Activated CD8-positive, alpha-beta memory T cell treated with anti-CD3 and anti-CD28 coated beads, Interleukin-2, amount 10 ng/mL, durations not matched to agents 7 days and 5 days (primary cell): ENCODE measurements at regions of chr5 and their contacts with region 1.

Region 1: DNA sequence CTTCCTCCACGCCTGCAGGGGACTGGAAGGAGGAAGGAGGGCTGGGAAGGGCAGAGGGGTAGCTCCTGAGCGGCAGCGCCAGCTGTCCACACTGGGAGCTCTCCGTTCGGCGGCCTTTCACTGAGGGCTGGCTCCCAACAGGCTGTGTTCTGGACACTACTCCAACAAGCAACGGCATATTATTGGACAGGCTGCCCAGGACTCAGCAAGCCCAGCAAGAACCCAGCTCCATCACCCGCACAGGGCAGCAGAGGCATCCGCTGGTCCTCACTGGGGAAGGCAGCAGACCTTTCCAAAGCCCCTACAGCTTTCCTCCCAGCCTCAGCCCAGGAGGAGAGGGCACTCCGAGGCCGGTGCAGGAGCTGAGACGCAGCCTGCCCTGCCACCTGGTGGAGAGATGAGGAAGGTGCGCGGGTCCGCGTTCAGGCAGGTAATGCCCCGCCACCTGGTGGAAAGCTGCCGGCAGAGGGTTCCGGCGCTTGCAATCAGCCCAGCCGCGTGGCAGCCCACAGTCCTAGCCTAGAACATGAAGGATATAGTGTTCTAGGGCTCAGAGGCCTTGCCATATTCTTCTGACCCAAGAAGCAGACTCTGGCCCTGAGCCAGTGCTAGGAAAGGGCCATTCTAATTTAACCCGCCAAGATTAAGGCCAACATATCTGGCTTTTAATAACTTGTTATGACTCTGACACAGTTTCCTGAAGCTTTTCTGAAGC is 74.4 kb downstream of the NRG2 start:
- DNase-seq: peak; percentile 92
- ATAC-seq: peak; percentile 100
- H3K4me3 Mint-ChIP-seq: no peak overlapping the region
- H3K27ac Mint-ChIP-seq: no peak overlapping the region
- H3K4me1 Mint-ChIP-seq: no peaks in the 10 kb centered on the region
- H3K27me3 Mint-ChIP-seq: peaks cover 26% of the 10 kb centered on the region

Region 2: GRCh38 chr5:139670369-139671095 is 298.2 kb before region 1 on chr5:
- CTCF ChIA-PET with region 1: no interaction called
- DNase-seq: peak; percentile 66
- ATAC-seq: peak; percentile 35
- H3K4me3 Mint-ChIP-seq: peak overlapping the region; percentile 81
- H3K27ac Mint-ChIP-seq: peak overlapping the region; percentile 80
- H3K4me1 Mint-ChIP-seq: peaks cover 45% of the 10 kb centered on the region
- H3K27me3 Mint-ChIP-seq: no peaks in the 10 kb centered on the region

Region 3: DNA sequence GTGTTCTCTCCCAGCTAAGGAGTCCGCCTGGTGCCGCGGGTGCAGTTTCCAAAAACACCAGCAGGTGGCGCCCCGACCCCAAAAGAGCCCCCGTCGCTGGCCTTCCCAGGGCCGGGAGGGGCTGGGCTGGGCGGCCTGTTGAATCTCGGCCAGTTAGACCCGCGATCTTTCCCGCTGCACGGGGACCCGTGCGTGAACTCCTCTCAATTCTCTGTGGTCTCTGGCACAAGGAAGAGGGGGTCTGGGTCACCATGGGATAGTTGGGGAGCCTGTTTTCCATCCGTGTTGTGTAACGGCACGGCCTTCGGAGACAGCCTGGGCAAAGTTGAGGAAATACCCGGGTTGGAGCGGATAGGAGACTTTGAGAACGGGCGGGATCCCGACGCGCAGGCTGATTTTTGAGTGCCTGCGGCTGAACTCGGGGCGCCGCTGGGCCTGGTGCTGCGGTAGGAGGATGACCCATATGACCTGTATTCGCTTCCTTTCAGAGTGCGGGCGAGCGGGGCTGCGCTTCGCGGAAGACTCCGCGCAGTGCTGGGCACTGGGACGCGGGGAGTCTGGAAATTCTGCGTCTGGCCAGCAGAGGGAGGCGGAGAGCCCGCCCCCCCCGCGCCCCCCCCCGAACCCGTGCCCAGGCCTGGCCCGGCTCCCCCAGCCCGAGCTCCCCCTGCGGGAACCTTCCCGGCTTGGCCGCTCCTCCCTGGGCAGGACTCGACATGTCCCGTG is 181.0 kb before region 1 on chr5:
- CTCF ChIA-PET with region 1: interaction called, 195 read pairs
- DNase-seq: peak; percentile 86
- ATAC-seq: peak; percentile 89
- H3K4me3 Mint-ChIP-seq: peak overlapping the region; percentile 71
- H3K27ac Mint-ChIP-seq: no peak overlapping the region
- H3K4me1 Mint-ChIP-seq: peaks cover 4% of the 10 kb centered on the region
- H3K27me3 Mint-ChIP-seq: peaks cover 29% of the 10 kb centered on the region

Region 4: GRCh38 chr5:139863855-139864558 is 104.7 kb before region 1 on chr5:
- CTCF ChIA-PET with region 1: interaction called, 22 read pairs
- DNase-seq: peak; percentile 71
- ATAC-seq: peak; percentile 67
- H3K4me3 Mint-ChIP-seq: no peak overlapping the region
- H3K27ac Mint-ChIP-seq: no peak overlapping the region
- H3K4me1 Mint-ChIP-seq: no peaks in the 10 kb centered on the region
- H3K27me3 Mint-ChIP-seq: peaks cover 15% of the 10 kb centered on the region

Region 5: GRCh38 chr5:139955053-139955605 is 13.6 kb before region 1 on chr5:
- CTCF ChIA-PET with region 1: interaction called, 42 read pairs
- DNase-seq: no peak
- ATAC-seq: peak; percentile 16
- H3K4me3 Mint-ChIP-seq: no peak overlapping the region
- H3K27ac Mint-ChIP-seq: no peak overlapping the region
- H3K4me1 Mint-ChIP-seq: no peaks in the 10 kb centered on the region
- H3K27me3 Mint-ChIP-seq: peaks cover 17% of the 10 kb centered on the region

Region 6: GRCh38 chr5:140157032-140157803 is 188.5 kb after region 1 on chr5:
- CTCF ChIA-PET with region 1: interaction called, 13 read pairs
- DNase-seq: peak; percentile 91
- ATAC-seq: peak; percentile 99
- H3K4me3 Mint-ChIP-seq: peak overlapping the region; percentile 57
- H3K27ac Mint-ChIP-seq: peak overlapping the region; percentile 46
- H3K4me1 Mint-ChIP-seq: peaks cover 6% of the 10 kb centered on the region
- H3K27me3 Mint-ChIP-seq: no peaks in the 10 kb centered on the region

Region 7: DNA sequence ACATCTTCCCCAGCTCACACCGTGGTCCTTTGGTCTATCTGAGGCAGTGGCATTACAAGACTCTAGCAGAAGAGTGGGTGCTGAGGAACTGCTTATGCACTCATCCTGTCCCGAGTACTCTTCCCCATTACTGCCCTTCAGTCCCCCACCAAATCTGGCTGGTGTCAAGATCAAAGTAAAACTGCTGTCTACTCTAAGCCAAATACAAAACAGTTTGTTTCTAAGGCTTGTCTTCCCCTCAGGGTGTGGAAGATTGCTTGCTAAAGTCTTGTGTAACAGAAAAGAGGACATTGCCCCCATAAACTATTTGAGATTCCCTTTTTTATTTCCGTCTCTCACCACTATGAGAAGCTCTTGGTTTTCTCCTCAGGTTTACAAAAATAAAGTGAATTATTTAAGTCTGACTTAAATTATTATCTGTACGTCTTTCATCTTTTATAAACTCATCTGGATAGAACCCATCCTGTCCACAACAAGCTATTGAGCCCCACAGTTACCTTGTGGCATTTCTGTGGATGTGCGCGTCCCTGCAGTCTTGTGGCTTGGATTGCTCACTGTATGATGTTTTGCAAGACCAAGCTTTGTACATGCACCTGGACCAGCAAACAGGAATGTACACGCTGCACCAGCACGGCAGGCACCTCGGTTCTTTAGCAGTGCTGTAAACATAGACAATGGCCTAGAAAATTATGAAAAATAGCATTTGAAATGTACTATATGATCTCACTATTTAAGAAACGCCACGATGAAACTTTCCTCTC is 267.3 kb after region 1 on chr5:
- CTCF ChIA-PET with region 1: no interaction called
- DNase-seq: no peak
- ATAC-seq: no peak
- H3K4me3 Mint-ChIP-seq: no peak overlapping the region
- H3K27ac Mint-ChIP-seq: no peak overlapping the region
- H3K4me1 Mint-ChIP-seq: no peaks in the 10 kb centered on the region
- H3K27me3 Mint-ChIP-seq: no peaks in the 10 kb centered on the region